ENCODE measurements at regions of chr2 and their contacts with region 1.

Region 1: DNA sequence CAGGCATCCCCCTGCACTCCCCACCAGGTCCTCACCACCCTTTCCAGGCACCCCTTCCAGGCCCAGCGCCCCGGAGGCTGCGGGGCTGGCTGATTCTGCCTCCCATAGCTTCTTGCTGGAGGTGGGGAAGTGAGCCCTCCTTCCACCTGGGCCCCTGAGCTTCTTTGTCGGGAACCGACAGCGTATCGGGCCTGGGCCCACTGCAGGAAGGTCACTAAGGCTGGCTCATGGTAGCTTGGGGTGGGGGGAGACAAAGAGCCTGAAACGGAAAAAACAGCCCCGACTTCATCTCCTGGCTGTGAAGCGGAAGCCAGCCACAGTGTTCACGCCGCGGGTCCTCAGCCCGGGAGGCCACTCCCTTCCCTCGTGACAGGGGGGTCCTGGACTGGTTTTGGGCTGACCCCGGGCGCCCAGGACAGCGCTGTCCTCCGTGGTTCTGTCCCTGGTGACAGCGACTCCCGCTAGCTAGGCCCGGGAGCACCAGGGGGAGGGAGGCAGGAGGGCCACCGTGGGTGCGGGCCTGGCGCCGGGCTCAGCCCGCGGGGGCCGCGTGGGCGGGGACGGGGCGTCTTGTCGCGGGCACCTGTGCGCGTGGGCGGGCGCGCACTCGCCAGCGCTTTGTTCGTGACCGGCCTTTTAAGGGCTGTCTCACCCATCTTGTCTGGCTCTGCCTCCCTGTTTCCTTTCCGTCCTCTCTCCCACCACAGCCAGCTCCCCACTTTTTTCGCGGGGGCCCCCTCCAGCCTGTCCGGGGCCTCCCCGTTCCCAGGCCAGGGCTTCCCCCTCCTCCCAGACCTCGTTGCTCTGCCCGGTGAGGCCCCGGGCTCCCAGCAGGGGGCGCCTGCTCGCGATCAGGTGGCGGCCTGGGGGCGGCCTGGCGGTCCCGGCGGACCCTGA is 64.9 kb downstream of the DNMT3A start:
- DNase-seq: peak in 1 of 2 experiments; percentile 94
- H3K4me3 ChIP-seq: peak overlapping the region; percentile 13 to 59 (median 26); a peak in 6 of 8 replicates
- H3K27ac ChIP-seq: no peak overlapping the region
- H3K4me1 ChIP-seq: peaks cover 3 to 33% (median 16%) of the 10 kb centered on the region in 4 experiments
- H3K27me3 ChIP-seq: no peaks in the 10 kb centered on the region
- CTCF ChIP-seq: peak; percentile 70 to 87 (median 71)
- EP300 ChIP-seq: no peak
- POLR2A ChIP-seq: no peak
- RAD21 ChIP-seq: peak; percentile 22 to 66; a peak in 3 of 4 replicates

Region 2: DNA sequence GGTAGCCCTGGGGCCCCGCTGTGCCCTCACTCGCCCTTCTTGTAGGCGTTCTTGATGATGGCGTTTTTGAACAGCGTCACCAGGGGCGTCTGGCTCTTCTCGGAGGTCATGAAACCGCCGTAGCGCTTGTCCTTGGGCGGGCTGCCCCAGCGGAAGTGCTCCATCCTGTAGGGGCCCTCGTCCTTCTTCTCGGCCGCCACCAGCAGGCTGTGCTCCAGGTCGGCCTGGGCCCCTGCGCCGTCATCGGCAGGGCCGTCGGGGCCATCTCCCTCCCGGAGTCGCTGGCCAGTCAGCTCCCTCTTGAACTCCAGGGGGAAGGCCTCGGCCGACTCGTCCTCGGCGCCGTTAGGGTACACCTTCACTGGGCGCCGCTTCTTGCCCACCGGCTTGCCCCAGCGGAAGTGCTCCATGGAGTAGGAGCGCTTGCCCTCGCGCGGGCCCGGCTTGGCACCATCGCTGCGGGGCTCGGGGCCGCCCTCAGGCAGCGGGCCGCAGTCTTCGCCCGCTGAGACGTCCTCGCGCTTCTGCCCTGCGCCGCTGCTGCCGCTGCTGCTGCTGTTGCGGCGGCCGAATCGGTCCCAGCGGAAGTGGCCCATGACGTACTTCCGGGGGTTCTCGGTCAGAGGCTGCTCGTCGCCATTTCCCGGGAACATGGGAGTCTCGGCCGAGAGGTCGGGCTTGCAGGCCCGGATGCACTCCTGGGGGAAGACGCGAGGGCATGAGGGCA is 115.6 kb before region 1 on chr2:
- CTCF ChIA-PET with region 1: no interaction called
- POLR2A ChIA-PET with region 1: no interaction called
- DNase-seq: peak in 1 of 2 experiments; percentile 73
- H3K4me3 ChIP-seq: no peak overlapping the region
- H3K27ac ChIP-seq: no peak overlapping the region
- H3K4me1 ChIP-seq: peaks cover 0 to 11% (median 0%) of the 10 kb centered on the region in 4 experiments; a peak in 3 of 7 replicates
- H3K27me3 ChIP-seq: peaks cover 0 to 3% (median 2%) of the 10 kb centered on the region in 4 experiments; a peak in 4 of 7 replicates
- CTCF ChIP-seq: peak; percentile 6 to 24 (median 24); a peak in 3 of 4 replicates
- EP300 ChIP-seq: no peak
- POLR2A ChIP-seq: no peak
- RAD21 ChIP-seq: peak; percentile 4 to 22; a peak in 2 of 4 replicates

Region 3: GRCh38 chr2:25246558-25247290 is 30.1 kb before region 1 on chr2:
- CTCF ChIA-PET with region 1: interaction called, 29 read pairs
- POLR2A ChIA-PET with region 1: interaction called, 13 read pairs
- DNase-seq: no peak
- H3K4me3 ChIP-seq: no peak overlapping the region
- H3K27ac ChIP-seq: no peak overlapping the region
- H3K4me1 ChIP-seq: peaks cover 8 to 17% (median 11%) of the 10 kb centered on the region in 4 experiments
- H3K27me3 ChIP-seq: no peaks in the 10 kb centered on the region
- CTCF ChIP-seq: no peak
- EP300 ChIP-seq: no peak
- POLR2A ChIP-seq: no peak
- RAD21 ChIP-seq: no peak

Region 4: GRCh38 chr2:25252281-25253105 is 24.3 kb before region 1 on chr2:
- CTCF ChIA-PET with region 1: interaction called, 29 read pairs
- POLR2A ChIA-PET with region 1: interaction called, 37 read pairs
- DNase-seq: peak; percentile 83 to 88
- H3K4me3 ChIP-seq: peak overlapping the region; percentile 83 to 92 (median 86)
- H3K27ac ChIP-seq: peak overlapping the region; percentile 54; the same call in 1 of the 2 replicates
- H3K4me1 ChIP-seq: peaks cover 19 to 37% (median 24%) of the 10 kb centered on the region in 4 experiments
- H3K27me3 ChIP-seq: no peaks in the 10 kb centered on the region
- CTCF ChIP-seq: no peak
- EP300 ChIP-seq: no peak; a peak in 1 of 3 replicates
- POLR2A ChIP-seq: peak in 1 of 2 experiments; percentile 50; a peak in 2 of 3 replicates
- RAD21 ChIP-seq: no peak

Region 5: GRCh38 chr2:25257931-25258846 is 18.6 kb before region 1 on chr2:
- CTCF ChIA-PET with region 1: interaction called, 29 read pairs
- POLR2A ChIA-PET with region 1: interaction called, 37 read pairs
- DNase-seq: no peak
- H3K4me3 ChIP-seq: peak overlapping the region in 3 of 4 experiments; percentile 1 to 46 (median 6); a peak in 4 of 8 replicates
- H3K27ac ChIP-seq: no peak overlapping the region
- H3K4me1 ChIP-seq: peaks cover 37 to 48% (median 38%) of the 10 kb centered on the region in 4 experiments
- H3K27me3 ChIP-seq: no peaks in the 10 kb centered on the region; a peak in 1 of 7 replicates
- CTCF ChIP-seq: peak; percentile 22 to 62 (median 45)
- EP300 ChIP-seq: no peak
- POLR2A ChIP-seq: no peak
- RAD21 ChIP-seq: peak; percentile 28 to 44; a peak in 3 of 4 replicates

Region 6: DNA sequence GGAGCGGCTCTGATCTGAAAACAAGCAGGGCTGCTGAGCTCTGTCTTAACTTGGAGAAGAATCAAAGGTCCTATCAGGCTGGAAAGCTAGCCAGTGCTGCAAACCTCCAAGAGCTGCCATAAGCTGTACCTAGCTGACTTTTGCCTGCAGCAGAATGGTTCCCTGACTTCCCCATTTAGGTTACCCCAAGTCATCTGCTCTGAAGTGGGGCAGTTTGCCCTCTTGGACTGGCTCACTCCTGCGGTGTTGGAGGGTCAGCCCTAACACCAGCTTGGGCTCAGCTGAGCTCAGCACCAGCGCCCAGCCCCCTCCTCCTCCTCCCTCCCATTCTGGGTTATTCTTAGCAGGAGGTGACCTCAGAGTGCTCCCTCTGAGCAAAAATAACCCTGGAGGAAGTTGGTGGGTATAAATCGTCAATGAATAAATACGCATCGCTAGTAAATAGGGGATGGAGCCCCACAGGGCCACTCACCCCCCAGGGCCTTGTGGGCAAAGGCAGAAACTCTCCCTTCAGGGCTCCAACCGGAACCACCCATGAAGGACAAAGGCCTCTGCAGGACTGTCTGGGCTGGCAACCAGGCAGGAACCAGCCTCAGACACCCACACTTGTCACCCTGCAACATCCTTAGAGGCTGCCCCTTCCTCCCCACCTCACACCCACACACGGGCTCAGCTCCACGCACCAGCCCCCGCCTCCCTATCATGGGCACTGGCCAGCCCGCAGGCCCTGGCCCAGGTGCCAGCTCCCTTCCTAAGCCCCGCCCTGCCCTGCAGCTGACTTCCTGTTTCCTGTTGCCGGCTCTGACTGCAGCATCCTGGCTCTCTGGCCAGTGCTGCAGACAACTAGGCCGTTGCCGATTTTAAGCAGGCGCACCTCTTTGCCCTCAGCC is 18.0 kb after region 1 on chr2:
- CTCF ChIA-PET with region 1: interaction called, 24 read pairs
- POLR2A ChIA-PET with region 1: interaction called, 3 read pairs
- DNase-seq: no peak
- H3K4me3 ChIP-seq: no peak overlapping the region
- H3K27ac ChIP-seq: no peak overlapping the region
- H3K4me1 ChIP-seq: peaks cover 0 to 13% (median 8%) of the 10 kb centered on the region in 4 experiments; a peak in 5 of 7 replicates
- H3K27me3 ChIP-seq: no peaks in the 10 kb centered on the region
- CTCF ChIP-seq: no peak
- EP300 ChIP-seq: no peak
- POLR2A ChIP-seq: no peak
- RAD21 ChIP-seq: no peak